Astrocyte of the cerebellum (primary cell): ENCODE measurements at regions of chr16 and their contacts with region 1.

Region 1: DNA sequence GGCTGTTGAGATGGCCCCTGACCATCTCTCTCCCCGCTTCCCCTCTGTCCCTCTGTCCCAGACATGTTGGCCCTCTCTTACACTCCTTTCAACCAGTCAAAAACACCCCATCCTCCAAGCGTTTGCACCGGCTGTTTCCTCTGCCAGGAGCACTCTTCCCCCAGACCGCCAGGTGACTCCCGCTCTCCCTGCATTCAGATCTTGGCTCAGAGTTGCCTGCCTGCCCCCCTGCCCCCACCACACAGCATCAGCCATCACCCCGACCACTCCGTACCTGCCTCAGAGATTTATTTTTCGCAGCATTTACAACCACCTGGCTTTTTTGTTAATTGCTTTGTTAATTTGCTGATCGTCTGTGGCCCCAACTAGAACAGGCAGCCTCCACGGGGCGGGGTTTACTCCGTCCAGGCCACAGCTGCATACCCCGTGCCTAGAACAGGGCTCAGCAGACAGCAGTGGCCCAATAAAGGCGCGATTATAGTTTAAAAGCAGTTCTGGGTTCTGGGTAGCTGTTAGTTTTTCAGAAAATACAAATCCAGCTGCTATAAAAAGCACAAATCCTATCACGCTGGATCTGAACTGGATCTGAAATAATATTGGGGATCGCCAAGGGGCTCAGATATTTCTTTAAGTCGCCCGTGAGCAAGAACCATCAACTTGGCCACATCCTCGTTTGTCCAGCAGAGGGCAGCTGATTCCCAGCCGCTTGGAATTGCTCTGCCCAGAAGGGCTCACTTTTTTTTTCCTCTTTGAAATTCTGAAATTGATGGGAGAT is 173.6 kb downstream of the IRF8 start:
- DNase-seq: peak; percentile 68
- H3K4me3 ChIP-seq: no peak overlapping the region
- CTCF ChIP-seq: peak; percentile 78

Region 2: DNA sequence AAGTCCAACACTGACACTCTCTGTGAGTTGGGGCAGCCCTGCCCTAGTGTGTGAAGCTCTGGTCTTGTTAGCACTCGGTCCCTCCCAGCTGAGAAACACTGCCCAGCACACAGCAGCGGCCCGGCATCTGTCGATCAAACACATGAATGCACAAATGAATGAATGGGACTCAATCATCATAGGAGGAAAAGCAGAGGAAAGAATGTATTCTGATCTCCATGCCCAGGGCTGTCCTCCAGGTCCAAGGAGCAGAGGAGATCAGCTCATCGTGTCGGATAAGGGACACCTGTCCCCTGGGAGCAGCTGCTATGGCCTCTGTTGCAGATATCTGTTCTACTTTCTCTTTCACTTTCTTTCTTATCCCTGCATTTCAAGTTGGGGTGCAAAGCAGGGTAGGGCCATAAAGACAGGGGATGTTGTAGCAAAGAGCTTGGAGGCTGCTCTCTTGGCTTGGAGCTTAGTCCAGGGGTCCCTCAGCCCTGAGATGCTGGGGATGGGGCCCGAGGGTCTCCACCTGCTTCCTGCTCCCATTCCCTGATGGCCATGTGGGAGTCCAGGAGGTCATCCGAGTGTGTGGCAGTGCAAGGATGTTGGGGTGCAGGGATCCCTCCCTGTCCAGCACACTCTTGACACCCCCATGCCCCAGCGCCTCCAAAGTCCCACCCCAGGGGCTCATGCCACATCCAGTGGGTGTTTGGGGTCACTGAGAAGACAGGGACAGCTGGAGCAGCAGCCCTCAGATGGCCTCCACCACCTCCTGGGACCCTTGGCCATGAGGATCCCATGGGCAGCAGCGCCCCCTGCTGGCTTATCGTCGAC is 85.4 kb before region 1 on chr16:
- in situ Hi-C with region 1: no loop called
- DNase-seq: no peak
- H3K4me3 ChIP-seq: no peak overlapping the region
- CTCF ChIP-seq: no peak

Region 3: DNA sequence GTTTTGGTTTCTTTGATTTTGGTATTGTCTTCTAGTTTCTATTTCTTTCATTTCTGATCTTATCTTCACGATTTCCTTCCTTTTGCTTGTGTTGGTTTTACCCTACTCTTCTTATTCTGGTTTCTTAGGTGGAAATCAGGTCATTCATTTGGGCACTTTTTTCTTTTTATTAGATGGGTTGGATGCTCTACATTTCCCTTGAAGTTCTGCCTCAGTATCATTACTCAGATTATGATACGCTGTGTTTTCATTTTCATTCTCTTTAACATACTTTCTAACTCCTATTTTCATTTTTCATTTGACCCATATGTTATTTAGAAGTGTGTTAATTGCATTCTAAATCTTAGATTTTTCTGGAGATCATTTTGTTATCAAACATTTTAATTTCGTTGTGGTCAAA is 65.0 kb before region 1 on chr16:
- in situ Hi-C with region 1: loop called (anchors 5 kb)
- DNase-seq: no peak
- H3K4me3 ChIP-seq: no peak overlapping the region
- CTCF ChIP-seq: no peak

Region 4: GRCh38 chr16:86195863-86196630 is 123.5 kb after region 1 on chr16:
- in situ Hi-C with region 1: loop called (anchors 25 kb)
- DNase-seq: no peak
- H3K4me3 ChIP-seq: no peak overlapping the region
- CTCF ChIP-seq: no peak

Region 5: GRCh38 chr16:86343027-86343787 is 270.7 kb after region 1 on chr16:
- in situ Hi-C with region 1: loop called (anchors 5 kb)
- DNase-seq: no peak
- H3K4me3 ChIP-seq: no peak overlapping the region
- CTCF ChIP-seq: no peak

Region 6: DNA sequence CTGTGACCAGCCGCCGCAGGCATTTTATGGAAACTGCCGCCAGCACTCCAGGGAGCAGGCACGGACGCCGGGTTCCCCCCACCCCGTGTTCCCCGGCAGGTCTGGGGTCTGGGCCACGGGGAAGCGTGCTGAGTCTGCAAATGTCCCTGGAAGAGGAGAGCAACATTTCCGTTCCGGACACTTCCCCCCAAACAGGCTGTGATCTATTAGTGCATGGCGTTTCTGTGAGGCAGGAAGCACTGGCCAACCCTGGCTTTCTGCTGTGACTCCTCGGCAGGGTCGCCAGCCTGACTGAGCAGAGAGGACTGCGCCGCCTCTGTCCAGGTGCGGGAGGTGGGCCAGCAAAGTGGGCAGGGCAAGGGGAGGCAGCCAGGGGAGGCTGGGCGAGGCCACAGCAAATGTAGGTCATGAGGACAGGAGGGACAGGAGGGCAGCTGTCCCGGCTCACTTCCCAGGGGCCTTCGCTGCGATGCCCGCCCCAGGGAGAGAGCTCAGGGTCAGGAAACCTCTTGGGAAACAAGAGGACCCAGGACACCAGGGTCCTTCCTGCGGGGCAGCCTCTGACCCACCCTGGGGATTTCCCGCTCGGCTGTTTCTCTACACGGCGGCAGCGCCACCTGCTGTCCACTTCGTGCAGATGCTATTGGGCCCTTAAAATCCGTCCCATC is 447.3 kb after region 1 on chr16:
- in situ Hi-C with region 1: loop called (anchors 5 kb)
- DNase-seq: no peak
- H3K4me3 ChIP-seq: no peak overlapping the region
- CTCF ChIP-seq: peak; percentile 91